ENCODE measurements at regions of chr2 and their contacts with region 1.

Region 1: DNA sequence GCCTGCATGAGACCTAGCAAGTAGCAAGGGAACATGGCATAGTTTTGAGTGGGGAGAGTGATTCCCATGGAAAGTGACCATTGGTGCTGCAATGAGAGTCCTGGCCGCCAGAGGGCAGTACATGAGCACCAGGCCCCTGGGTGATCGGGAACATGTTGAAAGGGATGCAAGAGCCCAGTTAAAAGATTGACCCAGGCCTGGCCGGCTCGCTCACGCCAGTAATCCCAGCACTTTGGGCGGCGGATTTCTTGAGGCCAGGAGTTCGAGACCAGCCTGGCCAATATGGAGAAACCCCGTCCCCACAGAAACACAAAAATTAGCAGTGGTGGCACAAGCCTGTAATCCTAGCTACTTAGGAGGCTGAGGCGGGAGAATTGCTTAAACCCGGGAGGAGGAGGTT is 22.2 kb downstream of the FAP start:
- DNase-seq: peak; percentile 27 to 52 (median 29)
- H3K4me3 ChIP-seq: no peak overlapping the region
- H3K4me3 Mint-ChIP-seq: no peak overlapping the region
- H3K27ac ChIP-seq: no peak overlapping the region
- H3K27ac Mint-ChIP-seq: no peak overlapping the region
- H3K4me1 ChIP-seq: no peaks in the 10 kb centered on the region
- H3K4me1 Mint-ChIP-seq: peaks cover 0 to 5% (median 1%) of the 10 kb centered on the region in 4 donors
- H3K27me3 ChIP-seq: no peaks in the 10 kb centered on the region
- H3K27me3 Mint-ChIP-seq: peaks cover 8 to 22% of the 10 kb centered on the region in 2 donors

Region 2: DNA sequence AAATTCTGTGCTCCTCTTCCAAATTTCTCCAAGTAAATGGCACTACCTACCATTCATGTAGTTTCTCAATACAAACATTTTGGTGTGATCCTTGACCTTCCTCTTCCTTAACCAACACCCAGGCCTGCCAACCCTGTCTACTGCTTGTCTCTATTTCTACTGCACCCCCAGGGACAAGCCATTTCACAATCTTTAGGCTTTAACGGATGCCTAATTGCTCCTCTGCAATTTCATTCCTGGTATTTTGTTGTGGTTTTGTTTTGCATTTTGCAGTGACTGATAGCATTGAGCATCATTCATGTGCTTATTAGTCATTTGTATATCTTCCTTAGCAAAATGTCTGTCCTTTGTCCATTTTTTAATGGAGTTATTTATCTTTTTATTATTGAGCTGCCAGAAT is 12.1 kb after region 1 on chr2:
- CTCF ChIA-PET with region 1: interaction called, 32 read pairs
- POLR2A ChIA-PET with region 1: no interaction called
- intact Hi-C with region 1: no loop called
- DNase-seq: no peak
- H3K4me3 ChIP-seq: no peak overlapping the region
- H3K4me3 Mint-ChIP-seq: no peak overlapping the region
- H3K27ac ChIP-seq: no peak overlapping the region
- H3K27ac Mint-ChIP-seq: peak overlapping the region in 1 of 7 donors; percentile 13
- H3K4me1 ChIP-seq: no peaks in the 10 kb centered on the region
- H3K4me1 Mint-ChIP-seq: no peaks in the 10 kb centered on the region
- H3K27me3 ChIP-seq: no peaks in the 10 kb centered on the region
- H3K27me3 Mint-ChIP-seq: peaks cover 3 to 7% of the 10 kb centered on the region in 2 donors

Region 3: DNA sequence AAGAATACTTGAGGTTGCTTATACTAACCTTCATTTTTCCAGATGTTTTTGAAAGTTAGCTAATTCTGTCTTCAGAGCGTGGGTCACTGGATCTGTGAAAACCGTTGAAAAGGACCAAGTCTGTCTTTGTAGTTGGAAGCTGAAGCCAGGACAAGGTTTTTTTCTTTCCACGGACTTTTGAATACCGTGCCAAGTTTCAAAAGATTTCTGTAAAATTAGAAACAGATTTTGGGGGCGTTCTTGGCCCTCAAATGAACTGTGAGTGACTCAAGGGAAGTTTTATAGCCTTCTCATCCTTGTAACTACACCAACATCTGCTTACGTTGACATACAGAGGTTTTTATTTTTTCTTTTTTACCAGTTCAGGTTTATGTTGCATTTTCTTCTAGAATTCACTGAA is 22.2 kb after region 1 on chr2 and contains the start of gene FAP:
- CTCF ChIA-PET with region 1: interaction called, 18 read pairs
- POLR2A ChIA-PET with region 1: no interaction called
- intact Hi-C with region 1: no loop called
- DNase-seq: no peak
- H3K4me3 ChIP-seq: no peak within 1 kb of the TSS
- H3K4me3 Mint-ChIP-seq: no peak within 1 kb of the TSS
- H3K27ac ChIP-seq: no peak within 1 kb of the TSS
- H3K27ac Mint-ChIP-seq: no peak within 1 kb of the TSS
- H3K4me1 ChIP-seq: no peaks in the 10 kb centered on the region
- H3K4me1 Mint-ChIP-seq: no peaks in the 10 kb centered on the region
- H3K27me3 ChIP-seq: no peaks in the 10 kb centered on the region
- H3K27me3 Mint-ChIP-seq: peaks cover 16% of the 10 kb centered on the region in 2 donors
- total RNA-seq, gene FAP: not detected

Region 4: GRCh38 chr2:162333968-162334367 is 112.9 kb after region 1 on chr2:
- CTCF ChIA-PET with region 1: interaction called, 29 read pairs
- POLR2A ChIA-PET with region 1: no interaction called
- intact Hi-C with region 1: loop called (anchors 1 kb)
- DNase-seq: no peak
- H3K4me3 ChIP-seq: no peak overlapping the region
- H3K4me3 Mint-ChIP-seq: no peak overlapping the region
- H3K27ac ChIP-seq: no peak overlapping the region
- H3K27ac Mint-ChIP-seq: no peak overlapping the region
- H3K4me1 ChIP-seq: no peaks in the 10 kb centered on the region
- H3K4me1 Mint-ChIP-seq: no peaks in the 10 kb centered on the region
- H3K27me3 ChIP-seq: no peaks in the 10 kb centered on the region
- H3K27me3 Mint-ChIP-seq: no peaks in the 10 kb centered on the region

Measured in CD4-positive, alpha-beta memory T cell (primary cell).